Thyroid gland (tissue), 4 donors: ENCODE measurements at regions of chr12 and their contacts with region 1.

Region 1: GRCh38 chr12:120580787-120581723 is at the start of gene POP5:
- DNase-seq: peak; percentile 98
- H3K4me3 ChIP-seq: peak within 1 kb of the TSS; percentile 36 to 78 (median 64)
- H3K27ac ChIP-seq: peak within 1 kb of the TSS in 2 of 3 donors; percentile 31 to 41
- H3K4me1 ChIP-seq: peaks cover 12 to 19% of the 10 kb centered on the region in 2 donors
- H3K27me3 ChIP-seq: no peaks in the 10 kb centered on the region
- CTCF ChIP-seq: no peak
- POLR2A ChIP-seq: peak in 1 of 2 donors; percentile 82
- total RNA-seq, gene POP5: 27.9 to 72.0 (median 38.5) TPM

Region 2: DNA sequence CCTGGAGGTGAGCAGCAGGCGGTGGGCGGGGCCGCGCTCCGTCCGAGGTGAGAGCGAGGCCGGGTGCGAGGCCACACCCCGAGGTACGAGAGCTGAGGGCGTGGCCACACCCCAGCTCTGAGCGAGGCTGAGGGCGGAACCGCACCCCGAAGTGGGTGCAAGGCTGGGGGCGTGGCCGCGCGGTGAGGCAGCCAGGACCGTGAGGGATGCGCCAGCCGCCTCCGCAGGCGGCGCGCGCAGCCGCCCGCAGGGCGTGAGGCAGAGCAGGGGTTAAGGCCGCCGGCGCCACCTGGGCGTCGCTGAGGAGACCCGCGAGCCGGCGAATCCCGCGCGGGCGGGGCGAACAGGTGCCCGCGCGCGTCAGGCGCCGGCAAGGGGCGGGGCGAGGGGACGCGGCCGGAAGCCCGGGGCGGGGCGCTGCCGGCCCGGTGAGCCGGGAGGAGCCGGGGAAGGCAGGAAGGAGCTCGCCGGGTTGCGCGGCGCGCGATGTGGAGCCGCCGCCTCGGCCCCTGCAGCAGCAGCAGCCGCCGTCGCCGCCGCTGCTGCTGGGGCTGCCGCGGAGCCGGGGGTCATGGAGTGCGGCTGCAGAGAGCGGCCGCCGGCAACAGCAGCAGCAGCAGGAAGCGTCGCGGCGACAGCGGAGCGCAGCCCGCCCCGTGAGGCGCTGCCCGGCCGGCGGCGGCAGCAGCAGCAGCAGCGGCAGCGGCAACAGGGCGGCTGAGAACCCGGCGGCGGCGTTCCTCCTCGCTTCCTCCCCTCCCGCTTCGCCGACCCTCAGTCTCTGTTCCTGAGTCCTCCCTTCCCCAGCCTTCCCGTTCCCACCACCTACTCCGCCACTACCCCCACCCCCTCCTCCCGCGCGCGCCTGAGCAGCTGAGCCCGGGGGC is 592.0 kb before region 1 on chr12 and contains the start of gene BICDL1:
- intact Hi-C with region 1: no loop called
- DNase-seq: peak; percentile 96 to 98
- H3K4me3 ChIP-seq: peak within 1 kb of the TSS in 2 of 3 donors; percentile 33 to 50
- H3K27ac ChIP-seq: peak within 1 kb of the TSS in 2 of 3 donors; percentile 64 to 77
- H3K4me1 ChIP-seq: peaks cover 13 to 21% of the 10 kb centered on the region in 2 donors
- H3K27me3 ChIP-seq: no peaks in the 10 kb centered on the region
- CTCF ChIP-seq: no peak
- POLR2A ChIP-seq: peak in 1 of 2 donors; percentile 75
- total RNA-seq, gene BICDL1: 10.5 to 81.8 (median 48.1) TPM

Region 3: GRCh38 chr12:120719496-120720233 is 138.6 kb after region 1 on chr12:
- intact Hi-C with region 1: loop called (anchors 5 kb)
- DNase-seq: no peak
- H3K4me3 ChIP-seq: no peak overlapping the region
- H3K27ac ChIP-seq: peak overlapping the region in 1 of 3 donors; percentile 54
- H3K4me1 ChIP-seq: peaks cover under 1 to 6% of the 10 kb centered on the region in 2 donors
- H3K27me3 ChIP-seq: no peaks in the 10 kb centered on the region
- CTCF ChIP-seq: no peak
- POLR2A ChIP-seq: no peak

Region 4: GRCh38 chr12:121095544-121096198 is 514.6 kb after region 1 on chr12:
- intact Hi-C with region 1: loop called (anchors 10 kb)
- DNase-seq: peak; percentile 58 to 64
- H3K4me3 ChIP-seq: peak overlapping the region in 1 of 3 donors; percentile 8
- H3K27ac ChIP-seq: no peak overlapping the region
- H3K4me1 ChIP-seq: peaks cover 5 to 12% of the 10 kb centered on the region in 2 donors
- H3K27me3 ChIP-seq: no peaks in the 10 kb centered on the region
- CTCF ChIP-seq: peak; percentile 56 to 89 (median 68)
- POLR2A ChIP-seq: no peak